Naive thymus-derived CD4-positive, alpha-beta T cell (primary cell): ENCODE measurements at regions of chr1 and their contacts with region 1.

Region 1: DNA sequence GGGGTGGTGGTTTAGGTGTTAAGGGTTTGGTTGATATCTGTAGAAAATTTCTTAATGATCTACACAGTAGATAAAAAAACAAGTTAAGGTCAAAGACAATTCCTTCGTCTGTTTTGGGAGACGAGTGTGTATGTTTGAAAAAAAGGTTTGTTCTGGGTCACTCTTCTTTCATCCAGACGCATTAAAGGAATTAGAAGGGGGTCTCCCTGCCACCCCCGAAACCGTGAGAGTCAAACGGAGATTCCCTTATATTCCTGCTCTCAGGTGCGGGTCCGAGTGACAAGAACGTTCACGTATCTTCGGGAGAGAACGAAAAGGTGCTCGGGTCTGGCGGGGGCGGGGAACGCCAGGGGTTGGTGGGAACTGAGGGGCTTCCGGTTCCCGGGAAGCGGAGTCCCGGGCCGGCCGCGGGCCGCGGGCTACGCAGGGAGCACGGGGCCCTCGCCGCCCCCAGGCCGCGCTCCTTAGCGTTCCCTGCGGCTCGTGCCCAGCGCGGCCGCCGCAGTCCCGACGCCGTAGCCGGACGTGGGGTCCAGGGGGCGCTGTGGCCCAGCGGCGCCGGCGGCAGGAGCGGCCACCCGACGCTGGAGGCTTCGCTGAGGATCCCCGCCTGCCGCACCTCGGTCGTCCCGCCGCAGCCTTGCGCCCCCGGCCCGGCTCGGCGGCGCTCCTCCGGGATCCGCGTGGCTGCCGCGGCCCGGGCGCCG is at the start of gene ZFYVE9:
- DNase-seq: peak; percentile 52 to 80 (median 73)
- ATAC-seq: peak; percentile 93
- H3K4me3 ChIP-seq: peak within 1 kb of the TSS; percentile 65
- H3K4me3 Mint-ChIP-seq: peak within 1 kb of the TSS; percentile 79 to 96 (median 92)
- H3K27ac ChIP-seq: peak within 1 kb of the TSS; percentile 72
- H3K27ac Mint-ChIP-seq: peak within 1 kb of the TSS; percentile 64 to 95 (median 86)
- H3K4me1 ChIP-seq: peaks cover 11 to 24% of the 10 kb centered on the region in 2 donors
- H3K4me1 Mint-ChIP-seq: peaks cover 26 to 48% (median 43%) of the 10 kb centered on the region in 7 donors
- H3K27me3 ChIP-seq: no peaks in the 10 kb centered on the region
- H3K27me3 Mint-ChIP-seq: peaks cover 0 to 44% (median 0%) of the 10 kb centered on the region in 5 donors
- total RNA-seq, gene ZFYVE9: 1.8 to 13.9 (median 7.6) TPM

Region 2: DNA sequence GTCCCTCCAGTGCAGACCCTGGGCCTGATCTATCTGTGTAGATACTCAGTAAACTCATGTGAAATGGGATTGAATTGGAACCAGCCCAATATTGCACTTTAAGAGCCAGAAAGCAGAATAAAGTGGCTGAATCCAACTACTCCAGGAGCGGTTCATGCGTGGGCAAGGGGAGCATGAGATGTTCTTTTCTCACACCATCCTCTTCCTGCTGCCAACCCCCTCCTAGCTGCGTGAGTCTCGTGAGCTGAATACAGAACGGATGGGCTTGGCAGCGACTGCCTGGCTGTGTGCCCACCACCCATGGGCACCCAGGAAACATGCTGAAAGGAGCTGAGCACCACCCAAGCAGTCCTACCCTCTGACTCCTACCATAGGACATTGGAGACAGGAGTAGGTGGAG is 1904.6 kb before region 1 on chr1:
- CTCF ChIA-PET with region 1: no interaction called
- POLR2A ChIA-PET with region 1: no interaction called
- intact Hi-C with region 1: no loop called
- DNase-seq: no peak
- ATAC-seq: no peak
- H3K4me3 ChIP-seq: no peak overlapping the region
- H3K4me3 Mint-ChIP-seq: no peak overlapping the region
- H3K27ac ChIP-seq: no peak overlapping the region
- H3K27ac Mint-ChIP-seq: no peak overlapping the region
- H3K4me1 ChIP-seq: no peaks in the 10 kb centered on the region
- H3K4me1 Mint-ChIP-seq: no peaks in the 10 kb centered on the region
- H3K27me3 ChIP-seq: no peaks in the 10 kb centered on the region
- H3K27me3 Mint-ChIP-seq: peaks cover 0 to 5% (median 5%) of the 10 kb centered on the region in 5 donors

Region 3: DNA sequence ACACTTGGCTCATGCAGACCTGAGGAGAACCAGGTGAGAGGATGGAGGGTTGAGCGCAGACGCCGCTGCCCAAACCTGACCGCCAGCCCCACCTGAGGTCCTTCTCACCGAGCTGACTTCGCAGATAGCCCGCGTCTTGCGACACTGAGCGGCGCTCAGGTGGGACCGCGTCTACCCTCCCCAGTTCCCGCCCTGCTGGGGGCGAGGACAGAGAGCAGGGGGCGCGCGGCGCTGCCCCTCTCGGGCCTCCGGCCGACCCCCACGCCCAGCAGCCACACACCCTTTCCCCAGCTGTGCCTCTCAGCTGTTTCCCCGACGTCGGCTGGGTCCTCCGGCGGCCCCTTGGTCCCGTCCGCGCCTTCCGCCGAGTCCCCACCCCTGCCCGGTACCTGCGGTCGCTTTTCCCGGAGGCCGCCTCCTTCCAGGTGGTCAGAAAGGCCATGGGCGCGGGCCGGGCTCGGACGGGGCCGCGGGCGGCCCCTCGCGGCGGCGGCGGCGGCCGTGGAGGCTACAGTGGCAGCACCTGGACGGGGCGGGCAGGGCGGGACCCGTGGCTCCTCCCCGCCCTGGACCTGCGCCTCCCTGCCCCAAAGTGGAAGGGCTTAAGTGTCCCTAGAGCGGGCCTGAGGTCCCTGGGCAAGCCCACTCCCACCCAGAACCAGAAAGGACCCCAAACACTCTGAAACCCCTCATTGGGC is 796.9 kb before region 1 on chr1:
- CTCF ChIA-PET with region 1: no interaction called
- POLR2A ChIA-PET with region 1: no interaction called
- intact Hi-C with region 1: no loop called
- DNase-seq: no peak
- ATAC-seq: no peak
- H3K4me3 ChIP-seq: no peak overlapping the region
- H3K4me3 Mint-ChIP-seq: no peak overlapping the region
- H3K27ac ChIP-seq: no peak overlapping the region
- H3K27ac Mint-ChIP-seq: no peak overlapping the region
- H3K4me1 ChIP-seq: no peaks in the 10 kb centered on the region
- H3K4me1 Mint-ChIP-seq: peaks cover 0 to 10% (median 3%) of the 10 kb centered on the region in 7 donors
- H3K27me3 ChIP-seq: peaks cover 0 to 14% of the 10 kb centered on the region in 2 donors
- H3K27me3 Mint-ChIP-seq: peaks cover 42 to 51% (median 47%) of the 10 kb centered on the region in 5 donors

Region 4: GRCh38 chr1:52033190-52034049 is 108.2 kb before region 1 on chr1 and contains the start of gene KTI12:
- CTCF ChIA-PET with region 1: no interaction called
- POLR2A ChIA-PET with region 1: no interaction called
- intact Hi-C with region 1: loop called in 1 of 2 experiments (anchors 1 kb)
- DNase-seq: peak; percentile 72 to 92 (median 89)
- ATAC-seq: peak; percentile 95
- H3K4me3 ChIP-seq: peak within 1 kb of the TSS; percentile 94
- H3K4me3 Mint-ChIP-seq: peak within 1 kb of the TSS; percentile 91 to 96 (median 93)
- H3K27ac ChIP-seq: peak within 1 kb of the TSS; percentile 73
- H3K27ac Mint-ChIP-seq: peak within 1 kb of the TSS; percentile 92 to 97 (median 96)
- H3K4me1 ChIP-seq: peaks cover 20 to 22% of the 10 kb centered on the region in 2 donors
- H3K4me1 Mint-ChIP-seq: peaks cover 18 to 52% (median 38%) of the 10 kb centered on the region in 7 donors
- H3K27me3 ChIP-seq: no peaks in the 10 kb centered on the region
- H3K27me3 Mint-ChIP-seq: no peaks in the 10 kb centered on the region
- total RNA-seq, gene KTI12: 14.5 to 23.5 (median 16.5) TPM

Region 5: DNA sequence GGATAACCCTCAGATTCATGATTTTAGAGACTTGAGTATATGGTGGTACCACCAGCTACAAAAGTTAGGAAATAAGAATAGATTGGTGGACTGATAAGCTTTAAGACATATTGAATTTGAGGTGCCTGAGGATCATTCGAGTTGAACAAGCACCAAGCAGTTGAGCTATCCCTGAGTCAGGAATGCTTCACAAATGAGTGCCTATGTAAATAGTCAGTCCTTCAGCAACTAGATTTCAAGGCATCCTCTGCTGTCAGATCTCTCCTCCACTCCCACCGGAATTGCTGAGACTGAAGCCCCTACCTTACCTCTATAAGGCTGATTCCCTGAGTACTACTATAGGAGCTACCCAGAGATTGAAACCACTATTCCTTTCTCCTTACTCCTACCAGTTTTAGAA is 78.5 kb before region 1 on chr1:
- CTCF ChIA-PET with region 1: no interaction called
- POLR2A ChIA-PET with region 1: no interaction called
- intact Hi-C with region 1: no loop called
- DNase-seq: no peak
- ATAC-seq: no peak
- H3K4me3 ChIP-seq: no peak overlapping the region
- H3K4me3 Mint-ChIP-seq: no peak overlapping the region
- H3K27ac ChIP-seq: no peak overlapping the region
- H3K27ac Mint-ChIP-seq: no peak overlapping the region
- H3K4me1 ChIP-seq: peaks cover 2% of the 10 kb centered on the region in 2 donors
- H3K4me1 Mint-ChIP-seq: peaks cover 21 to 55% (median 49%) of the 10 kb centered on the region in 7 donors
- H3K27me3 ChIP-seq: no peaks in the 10 kb centered on the region
- H3K27me3 Mint-ChIP-seq: no peaks in the 10 kb centered on the region

Region 6: DNA sequence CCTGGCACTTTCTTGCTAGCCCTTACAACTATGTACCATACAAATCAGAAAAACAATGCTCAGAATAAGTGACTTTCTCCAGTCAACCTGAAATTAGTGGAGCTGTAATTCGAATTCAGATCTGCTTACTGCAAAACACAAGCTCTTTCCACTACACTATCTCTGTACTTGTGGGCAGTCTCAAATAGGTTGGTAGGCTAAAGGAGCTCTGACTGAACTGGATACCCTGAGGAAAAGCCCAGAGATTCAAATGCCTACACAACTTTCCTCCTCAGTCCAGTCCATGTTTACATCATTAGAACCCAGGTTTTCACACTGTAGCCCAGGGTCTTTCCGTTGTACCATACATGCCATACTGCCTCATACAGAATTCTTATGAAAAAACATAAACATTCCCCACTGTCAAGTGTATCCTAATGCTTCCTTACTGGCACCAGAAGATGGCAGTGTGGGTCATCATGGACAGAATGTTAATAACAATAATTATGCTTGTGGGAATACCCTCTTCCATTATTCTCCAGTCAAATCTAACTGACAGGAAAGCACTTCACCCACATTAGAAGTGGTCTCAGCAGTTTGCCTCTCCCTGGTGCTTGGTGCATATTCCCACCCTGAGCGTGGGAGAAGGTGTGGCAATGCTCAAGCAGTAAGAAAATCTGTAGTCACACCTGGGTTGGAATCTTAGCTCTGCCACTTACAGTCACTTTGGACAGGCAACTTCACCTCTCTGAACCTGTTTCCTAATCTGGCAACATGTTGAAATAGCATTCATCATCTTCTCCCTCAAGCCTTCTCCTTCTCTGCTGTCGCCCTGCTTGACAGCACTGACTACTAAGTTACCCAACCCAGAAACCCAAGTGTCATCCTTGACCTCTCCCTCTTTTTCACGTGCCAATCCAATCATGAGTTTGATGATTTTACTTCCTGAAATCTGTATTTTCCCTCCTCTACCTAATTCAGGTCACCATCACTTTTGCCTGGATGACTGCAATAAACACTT is 14.2 kb before region 1 on chr1:
- CTCF ChIA-PET with region 1: interaction called, 3 read pairs
- POLR2A ChIA-PET with region 1: no interaction called
- intact Hi-C with region 1: loop called in 1 of 2 experiments (anchors 1 kb)
- DNase-seq: peak in 3 of 9 donors; percentile 14 to 27 (median 25)
- ATAC-seq: peak; percentile 64
- H3K4me3 ChIP-seq: no peak overlapping the region
- H3K4me3 Mint-ChIP-seq: no peak overlapping the region
- H3K27ac ChIP-seq: no peak overlapping the region
- H3K27ac Mint-ChIP-seq: no peak overlapping the region
- H3K4me1 ChIP-seq: no peaks in the 10 kb centered on the region
- H3K4me1 Mint-ChIP-seq: peaks cover 0 to 4% (median 0%) of the 10 kb centered on the region in 7 donors
- H3K27me3 ChIP-seq: no peaks in the 10 kb centered on the region
- H3K27me3 Mint-ChIP-seq: peaks cover 0 to 47% (median 9%) of the 10 kb centered on the region in 5 donors

Region 7: DNA sequence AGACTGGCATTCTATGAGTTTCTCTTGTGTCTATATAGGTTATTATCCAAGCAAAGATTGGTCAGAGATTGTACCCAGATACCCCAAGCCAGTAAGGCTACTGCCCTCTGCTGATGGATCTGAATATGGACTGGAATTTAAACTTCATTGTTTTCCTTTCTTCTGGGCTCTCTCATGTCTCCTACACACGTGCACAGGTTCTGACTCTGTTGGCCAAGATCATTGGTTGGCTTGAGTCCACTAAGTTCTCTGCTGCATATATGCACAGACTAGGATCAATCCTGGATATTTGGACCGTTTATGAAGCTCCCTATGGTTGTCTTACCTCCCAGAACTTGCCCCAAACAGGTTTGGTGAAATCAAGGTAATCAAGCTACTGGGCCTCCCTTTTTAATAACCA is 154.7 kb after region 1 on chr1:
- CTCF ChIA-PET with region 1: interaction called, 4 read pairs
- POLR2A ChIA-PET with region 1: no interaction called
- intact Hi-C with region 1: loop called (anchors 1 to 2 kb)
- DNase-seq: peak in 7 of 9 donors; percentile 5 to 32 (median 19)
- ATAC-seq: peak; percentile 55
- H3K4me3 ChIP-seq: no peak overlapping the region
- H3K4me3 Mint-ChIP-seq: no peak overlapping the region
- H3K27ac ChIP-seq: no peak overlapping the region
- H3K27ac Mint-ChIP-seq: peak overlapping the region in 1 of 9 donors; percentile 0
- H3K4me1 ChIP-seq: no peaks in the 10 kb centered on the region
- H3K4me1 Mint-ChIP-seq: peaks cover 0 to 2% (median 0%) of the 10 kb centered on the region in 7 donors
- H3K27me3 ChIP-seq: no peaks in the 10 kb centered on the region
- H3K27me3 Mint-ChIP-seq: no peaks in the 10 kb centered on the region

Region 8: DNA sequence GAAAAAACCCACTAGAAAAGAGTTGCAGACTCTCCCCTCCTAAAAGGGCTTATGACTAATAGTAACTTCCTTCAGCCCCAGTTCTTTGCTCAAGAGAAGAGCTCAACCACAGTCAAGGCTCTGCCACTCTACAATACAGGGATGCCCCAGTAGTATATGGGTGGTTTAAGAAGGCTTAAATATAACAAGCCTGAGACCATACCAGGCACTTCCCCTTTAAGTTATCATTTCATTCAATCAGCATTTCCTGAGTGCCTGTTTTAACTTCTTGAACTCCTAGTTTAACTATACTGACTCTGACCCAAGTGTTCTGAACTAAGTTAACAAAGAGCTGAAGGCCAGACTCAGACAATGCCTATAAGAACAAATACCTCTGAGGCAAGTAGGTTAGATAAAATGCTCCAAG is 282.6 kb after region 1 on chr1:
- CTCF ChIA-PET with region 1: no interaction called
- POLR2A ChIA-PET with region 1: no interaction called
- intact Hi-C with region 1: loop called in 1 of 2 experiments (anchors 5 kb)
- DNase-seq: peak in 7 of 9 donors; percentile 38 to 71 (median 57)
- ATAC-seq: peak; percentile 93
- H3K4me3 ChIP-seq: peak overlapping the region; percentile 14
- H3K4me3 Mint-ChIP-seq: peak overlapping the region; percentile 49 to 81 (median 74)
- H3K27ac ChIP-seq: peak overlapping the region; percentile 63
- H3K27ac Mint-ChIP-seq: peak overlapping the region; percentile 85 to 96 (median 91)
- H3K4me1 ChIP-seq: peaks cover 35 to 45% of the 10 kb centered on the region in 2 donors
- H3K4me1 Mint-ChIP-seq: peaks cover 33 to 72% (median 51%) of the 10 kb centered on the region in 7 donors
- H3K27me3 ChIP-seq: no peaks in the 10 kb centered on the region
- H3K27me3 Mint-ChIP-seq: no peaks in the 10 kb centered on the region

Region 9: DNA sequence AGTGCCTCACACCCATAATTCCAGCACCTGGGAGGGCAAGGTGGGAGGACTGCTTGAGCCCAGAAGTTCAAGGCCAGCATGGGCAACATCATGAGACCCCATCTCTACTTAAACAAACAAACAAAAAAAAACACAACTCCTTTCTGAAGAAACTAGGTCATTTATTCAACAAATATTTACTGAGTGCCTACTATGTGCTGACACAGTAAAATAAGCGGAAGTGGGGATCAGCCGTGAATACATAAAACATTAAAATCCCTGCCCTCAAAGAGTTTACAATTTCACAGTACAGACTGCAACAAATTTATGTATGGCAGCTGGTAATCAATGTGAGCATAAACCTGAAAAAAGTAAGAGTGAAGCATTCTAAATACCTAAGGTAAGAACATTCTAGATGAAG is 346.0 kb after region 1 on chr1:
- CTCF ChIA-PET with region 1: no interaction called
- POLR2A ChIA-PET with region 1: no interaction called
- intact Hi-C with region 1: loop called in 1 of 2 experiments (anchors 5 kb)
- DNase-seq: no peak
- ATAC-seq: no peak
- H3K4me3 ChIP-seq: no peak overlapping the region
- H3K4me3 Mint-ChIP-seq: no peak overlapping the region
- H3K27ac ChIP-seq: no peak overlapping the region
- H3K27ac Mint-ChIP-seq: peak overlapping the region in 5 of 9 donors; percentile 9 to 81 (median 38)
- H3K4me1 ChIP-seq: no peaks in the 10 kb centered on the region
- H3K4me1 Mint-ChIP-seq: peaks cover 0 to 6% (median 0%) of the 10 kb centered on the region in 7 donors
- H3K27me3 ChIP-seq: no peaks in the 10 kb centered on the region
- H3K27me3 Mint-ChIP-seq: no peaks in the 10 kb centered on the region